ENCODE measurements at regions of chrX and their contacts with region 1.

Region 1: DNA sequence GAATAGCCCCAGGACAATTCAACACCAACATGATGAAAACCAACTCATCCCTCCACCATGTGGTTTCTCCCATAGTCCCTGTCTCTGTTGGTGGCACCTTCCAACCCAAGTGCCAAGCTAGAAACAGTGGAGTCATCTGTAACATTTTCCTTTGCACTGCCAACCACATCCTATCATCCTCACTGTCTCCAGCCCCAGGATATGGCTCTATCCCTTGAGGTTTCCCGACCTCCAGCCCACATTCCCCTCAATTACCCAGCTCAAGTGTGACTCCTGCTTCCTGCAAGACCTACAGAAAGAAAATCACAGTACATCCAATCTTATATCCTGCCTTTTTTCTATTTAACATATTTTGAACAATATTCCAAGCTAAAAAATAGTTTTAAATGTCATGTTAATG is 24.2 kb downstream of the PNMA6F start:
- DNase-seq: no peak
- ATAC-seq: no peak
- H3K4me3 ChIP-seq: no peak overlapping the region
- H3K27ac ChIP-seq: no peak overlapping the region
- H3K4me1 ChIP-seq: no peaks in the 10 kb centered on the region
- H3K27me3 ChIP-seq: no peaks in the 10 kb centered on the region
- CTCF ChIP-seq: no peak
- POLR2A ChIP-seq: no peak
- RAD21 ChIP-seq: no peak

Region 2: DNA sequence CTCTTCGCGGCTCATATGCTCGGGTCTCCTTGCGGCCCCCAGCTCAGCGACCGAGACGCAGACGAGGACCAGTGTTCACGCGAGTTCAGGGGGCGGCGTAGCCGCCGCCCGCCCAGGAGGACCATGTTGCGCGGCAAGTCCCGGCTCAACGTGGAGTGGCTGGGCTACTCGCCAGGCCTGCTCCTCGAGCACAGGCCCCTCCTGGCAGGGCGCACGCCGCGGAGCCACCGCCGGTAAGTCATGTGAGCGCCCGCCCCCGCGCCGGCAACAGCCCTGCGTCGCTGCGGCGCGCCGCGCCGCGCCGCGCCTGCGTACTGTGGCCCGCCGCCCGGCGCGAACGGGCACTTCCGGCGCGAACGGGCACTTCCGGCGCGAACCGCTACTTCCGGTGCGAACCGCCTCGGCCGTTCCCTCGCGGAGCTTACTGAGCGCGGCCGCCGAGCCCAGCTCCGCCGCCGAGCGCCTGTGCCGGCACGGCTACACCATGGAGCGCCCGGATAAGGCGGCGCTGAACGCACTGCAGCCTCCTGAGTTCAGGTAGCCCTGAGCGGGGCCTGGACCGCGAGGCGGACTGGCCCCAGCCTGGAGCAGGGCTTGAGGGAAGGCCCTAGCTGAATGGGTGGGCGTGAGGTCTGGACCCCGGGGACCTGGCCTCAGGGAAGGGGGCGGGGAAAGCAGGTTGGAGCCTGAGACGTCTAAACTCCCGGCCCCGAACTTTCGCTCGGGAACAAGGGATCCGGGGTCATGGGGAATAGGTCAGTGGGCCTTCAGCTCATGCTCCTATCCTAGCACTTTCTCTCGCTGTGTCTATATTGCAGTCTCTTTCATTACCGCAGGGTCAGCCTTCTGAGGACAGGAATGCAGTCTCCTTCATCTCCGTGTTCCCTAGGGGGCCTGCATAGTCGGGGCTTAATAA is 1900.3 kb before region 1 on chrX and contains the start of gene VMA21:
- CTCF ChIA-PET with region 1: no interaction called
- POLR2A ChIA-PET with region 1: no interaction called
- dilution Hi-C with region 1: no loop called
- in situ Hi-C with region 1: no loop called
- intact Hi-C with region 1: no loop called
- DNase-seq: peak; percentile 82
- ATAC-seq: peak; percentile 91
- H3K4me3 ChIP-seq: peak within 1 kb of the TSS; percentile 97
- H3K27ac ChIP-seq: peak within 1 kb of the TSS; percentile 87
- H3K4me1 ChIP-seq: peaks cover 2% of the 10 kb centered on the region; the same call in 1 of the 2 replicates
- H3K27me3 ChIP-seq: no peaks in the 10 kb centered on the region
- CTCF ChIP-seq: no peak
- POLR2A ChIP-seq: peak; percentile 32; the same call in 1 of the 2 replicates
- RAD21 ChIP-seq: no peak
- total RNA-seq, gene VMA21: 28.5 and 49.4 TPM in 2 replicates

Region 3: DNA sequence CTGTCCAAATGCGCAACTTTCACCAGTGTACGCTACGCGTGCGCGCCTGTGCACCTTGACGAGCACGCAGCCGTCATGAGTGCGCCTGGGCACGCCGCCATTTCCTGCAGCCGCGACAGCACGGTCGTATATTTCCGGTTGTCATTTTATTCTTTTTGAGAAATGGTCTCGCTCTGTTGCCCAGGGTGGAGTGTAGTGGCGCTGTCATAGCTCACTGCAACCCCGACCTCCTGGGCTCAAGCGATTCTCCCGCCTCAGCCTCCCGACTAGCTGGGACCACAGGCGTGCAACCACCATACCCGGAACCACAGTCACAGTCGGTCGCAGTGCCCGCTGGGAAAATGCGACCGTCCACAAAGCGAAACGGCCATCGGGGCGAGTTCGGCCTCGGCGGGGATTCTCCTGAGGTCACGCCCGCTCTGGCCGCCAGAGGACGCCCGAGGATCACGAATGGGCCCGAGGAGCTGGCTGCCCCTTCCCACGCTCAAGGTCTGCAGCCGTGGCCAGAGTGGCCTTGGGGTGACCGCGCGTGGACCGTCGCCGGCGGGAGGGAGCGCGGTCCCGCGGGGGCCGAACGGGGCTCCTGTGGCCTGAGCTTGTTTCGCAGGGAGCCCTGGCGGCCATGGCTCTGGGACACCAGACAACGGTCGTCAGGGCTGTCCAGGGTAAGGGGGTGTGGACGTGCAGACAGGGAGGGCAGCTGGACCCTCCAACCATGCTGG is 264.8 kb before region 1 on chrX:
- CTCF ChIA-PET with region 1: no interaction called
- POLR2A ChIA-PET with region 1: no interaction called
- dilution Hi-C with region 1: no loop called
- in situ Hi-C with region 1: no loop called
- intact Hi-C with region 1: no loop called
- DNase-seq: peak; percentile 18
- ATAC-seq: peak; percentile 93
- H3K4me3 ChIP-seq: no peak overlapping the region
- H3K27ac ChIP-seq: no peak overlapping the region
- H3K4me1 ChIP-seq: no peaks in the 10 kb centered on the region
- H3K27me3 ChIP-seq: no peaks in the 10 kb centered on the region; the same call in 1 of the 2 replicates
- CTCF ChIP-seq: peak; percentile 80
- POLR2A ChIP-seq: no peak
- RAD21 ChIP-seq: peak; percentile 90

Region 4: DNA sequence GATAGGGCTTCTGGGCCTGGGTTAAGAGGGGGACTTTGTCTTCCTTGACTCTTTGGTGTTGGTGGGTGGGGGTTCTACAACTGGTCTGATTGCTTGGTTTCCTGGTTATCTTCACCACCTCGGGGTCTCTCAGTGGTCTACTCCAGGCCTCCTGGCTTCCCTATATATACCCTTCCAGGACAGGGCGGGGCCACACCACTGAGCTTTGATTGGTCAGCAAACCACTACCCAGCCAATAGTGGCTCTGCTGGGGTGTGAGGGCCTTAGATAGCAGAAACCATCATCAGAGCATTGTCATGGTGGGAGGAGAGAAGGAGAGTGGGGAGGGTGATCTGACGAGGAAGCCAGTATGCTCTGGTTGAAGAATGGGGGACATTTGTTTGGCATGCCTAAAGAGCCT is 132.6 kb before region 1 on chrX:
- CTCF ChIA-PET with region 1: no interaction called
- POLR2A ChIA-PET with region 1: no interaction called
- dilution Hi-C with region 1: no loop called
- in situ Hi-C with region 1: no loop called
- intact Hi-C with region 1: no loop called
- DNase-seq: no peak
- ATAC-seq: no peak
- H3K4me3 ChIP-seq: no peak overlapping the region
- H3K27ac ChIP-seq: no peak overlapping the region
- H3K4me1 ChIP-seq: no peaks in the 10 kb centered on the region
- H3K27me3 ChIP-seq: no peaks in the 10 kb centered on the region; the same call in 1 of the 2 replicates
- CTCF ChIP-seq: no peak
- POLR2A ChIP-seq: no peak
- RAD21 ChIP-seq: no peak

Region 5: DNA sequence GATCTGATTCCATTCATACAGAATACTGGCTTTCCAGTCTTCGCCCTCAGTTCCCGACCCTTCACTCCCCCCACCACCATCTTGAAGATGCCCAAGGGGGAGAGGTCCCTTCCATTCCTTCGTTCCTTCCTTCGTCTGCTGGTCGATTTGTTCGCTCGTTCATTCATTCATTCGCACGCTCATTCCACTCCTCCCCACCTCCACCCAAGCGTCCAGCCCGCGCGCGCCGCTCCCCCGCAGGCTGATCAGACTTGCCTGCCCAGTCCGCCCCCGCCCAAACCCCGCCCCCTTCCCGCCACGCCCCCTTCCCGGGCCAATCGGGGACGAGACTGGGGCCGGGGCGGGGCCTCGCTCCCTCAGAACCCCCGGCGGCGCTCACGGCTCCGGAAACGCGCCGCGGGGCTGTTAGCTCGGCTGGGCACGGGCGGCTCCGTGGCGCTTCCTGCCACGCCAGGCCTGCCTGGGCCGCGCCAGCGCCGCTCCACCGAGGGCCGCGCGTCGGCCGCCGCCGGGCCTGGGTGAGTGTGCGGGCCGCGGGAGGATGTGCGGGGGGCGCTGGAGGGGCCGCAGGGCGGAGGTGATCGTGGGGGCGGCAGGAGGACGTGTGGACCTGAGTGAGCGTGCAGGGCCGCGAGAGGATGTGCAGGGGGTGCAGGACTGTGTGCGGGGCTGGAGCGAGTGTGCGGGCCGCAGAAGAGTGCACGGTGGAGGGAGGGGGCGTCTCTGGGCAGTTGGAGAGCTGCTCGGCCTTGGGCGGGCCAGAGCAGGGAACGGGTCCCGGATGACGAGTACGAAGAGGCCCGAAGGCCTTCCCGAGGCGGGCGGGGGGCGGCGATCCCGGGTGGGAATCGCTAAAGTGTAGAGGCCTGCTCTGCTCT is 36.6 kb after region 1 on chrX and contains the start of gene ZNF275:
- CTCF ChIA-PET with region 1: no interaction called
- POLR2A ChIA-PET with region 1: no interaction called
- dilution Hi-C with region 1: no loop called
- in situ Hi-C with region 1: no loop called
- intact Hi-C with region 1: loop called (anchors 1 kb)
- DNase-seq: peak; percentile 61
- ATAC-seq: peak; percentile 96
- H3K4me3 ChIP-seq: peak within 1 kb of the TSS; percentile 100
- H3K27ac ChIP-seq: peak within 1 kb of the TSS; percentile 95
- H3K4me1 ChIP-seq: peaks cover 2% of the 10 kb centered on the region; the same call in 1 of the 2 replicates
- H3K27me3 ChIP-seq: peaks cover 4% of the 10 kb centered on the region
- CTCF ChIP-seq: no peak
- POLR2A ChIP-seq: peak; percentile 84
- RAD21 ChIP-seq: no peak
- total RNA-seq, gene ZNF275: 6.6 and 8.3 TPM in 2 replicates

Region 6: GRCh38 chrX:153537526-153538295 is 240.3 kb after region 1 on chrX:
- CTCF ChIA-PET with region 1: no interaction called
- POLR2A ChIA-PET with region 1: no interaction called
- dilution Hi-C with region 1: no loop called
- in situ Hi-C with region 1: no loop called
- intact Hi-C with region 1: no loop called
- DNase-seq: no peak
- ATAC-seq: no peak
- H3K4me3 ChIP-seq: no peak overlapping the region
- H3K27ac ChIP-seq: no peak overlapping the region
- H3K4me1 ChIP-seq: no peaks in the 10 kb centered on the region
- H3K27me3 ChIP-seq: peaks cover 10% of the 10 kb centered on the region; the same call in 1 of the 2 replicates
- CTCF ChIP-seq: no peak
- POLR2A ChIP-seq: no peak
- RAD21 ChIP-seq: no peak

Region 7: DNA sequence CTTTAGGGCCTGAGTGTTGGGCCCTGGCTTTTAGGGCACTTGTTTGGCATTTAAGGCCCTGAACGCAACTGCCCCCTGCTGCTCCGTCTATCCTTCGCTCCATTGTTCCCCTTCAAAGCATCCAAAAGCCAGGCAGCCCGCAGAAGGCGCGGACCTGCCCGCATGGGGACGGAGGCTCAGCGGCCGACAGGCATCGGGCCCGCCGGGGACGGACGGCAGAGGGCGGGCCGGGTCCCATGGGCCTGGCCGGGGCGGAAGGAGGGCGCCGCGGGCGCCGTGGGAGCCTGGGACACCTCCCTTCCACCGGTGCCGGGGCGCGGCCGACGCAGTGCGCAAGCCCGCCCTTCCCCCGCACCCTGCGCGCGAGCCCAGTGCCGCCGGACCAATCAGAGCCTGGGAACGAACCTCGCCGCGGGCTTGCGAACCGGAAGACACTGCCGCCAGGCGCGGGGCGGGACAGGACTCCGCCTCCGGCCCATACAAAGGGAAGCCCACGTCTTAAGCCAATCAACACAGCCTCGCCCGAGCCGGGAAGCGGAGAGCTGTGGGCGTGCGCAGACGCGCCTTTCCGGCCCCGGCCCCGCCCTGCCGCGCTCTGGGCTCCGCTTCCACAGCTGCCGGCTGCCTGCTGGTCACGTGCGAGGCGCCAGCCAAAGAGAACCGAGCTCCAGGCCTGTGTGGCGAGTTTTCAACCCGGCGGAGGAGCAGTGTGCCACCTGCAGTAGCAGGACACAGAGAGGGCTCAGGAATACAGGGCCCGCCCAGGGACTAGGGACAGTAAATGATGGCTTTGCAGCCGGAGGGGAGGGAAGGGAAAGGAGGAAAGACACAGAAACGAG is 630.8 kb after region 1 on chrX:
- CTCF ChIA-PET with region 1: no interaction called
- POLR2A ChIA-PET with region 1: interaction called, 12 read pairs
- dilution Hi-C with region 1: no loop called
- in situ Hi-C with region 1: no loop called
- intact Hi-C with region 1: no loop called
- DNase-seq: peak; percentile 98
- ATAC-seq: peak; percentile 94
- H3K4me3 ChIP-seq: peak overlapping the region; percentile 82
- H3K27ac ChIP-seq: peak overlapping the region; percentile 97
- H3K4me1 ChIP-seq: peaks cover 2% of the 10 kb centered on the region
- H3K27me3 ChIP-seq: no peaks in the 10 kb centered on the region; the same call in 1 of the 2 replicates
- CTCF ChIP-seq: no peak; the same call in 1 of the 2 replicates
- POLR2A ChIP-seq: peak; percentile 65
- RAD21 ChIP-seq: 0 out of 2 replicates have a peak, but pooled peaks have one; percentile 7

Measured in IMR-90 (cell line).